Activated CD8-positive, alpha-beta T cell treated with anti-CD3 and anti-CD28 coated beads, Interleukin-2, amount 10 ng/mL, durations not matched to agents 7 days and 5 days (primary cell): ENCODE measurements at regions of chr17 and their contacts with region 1.

Region 1: DNA sequence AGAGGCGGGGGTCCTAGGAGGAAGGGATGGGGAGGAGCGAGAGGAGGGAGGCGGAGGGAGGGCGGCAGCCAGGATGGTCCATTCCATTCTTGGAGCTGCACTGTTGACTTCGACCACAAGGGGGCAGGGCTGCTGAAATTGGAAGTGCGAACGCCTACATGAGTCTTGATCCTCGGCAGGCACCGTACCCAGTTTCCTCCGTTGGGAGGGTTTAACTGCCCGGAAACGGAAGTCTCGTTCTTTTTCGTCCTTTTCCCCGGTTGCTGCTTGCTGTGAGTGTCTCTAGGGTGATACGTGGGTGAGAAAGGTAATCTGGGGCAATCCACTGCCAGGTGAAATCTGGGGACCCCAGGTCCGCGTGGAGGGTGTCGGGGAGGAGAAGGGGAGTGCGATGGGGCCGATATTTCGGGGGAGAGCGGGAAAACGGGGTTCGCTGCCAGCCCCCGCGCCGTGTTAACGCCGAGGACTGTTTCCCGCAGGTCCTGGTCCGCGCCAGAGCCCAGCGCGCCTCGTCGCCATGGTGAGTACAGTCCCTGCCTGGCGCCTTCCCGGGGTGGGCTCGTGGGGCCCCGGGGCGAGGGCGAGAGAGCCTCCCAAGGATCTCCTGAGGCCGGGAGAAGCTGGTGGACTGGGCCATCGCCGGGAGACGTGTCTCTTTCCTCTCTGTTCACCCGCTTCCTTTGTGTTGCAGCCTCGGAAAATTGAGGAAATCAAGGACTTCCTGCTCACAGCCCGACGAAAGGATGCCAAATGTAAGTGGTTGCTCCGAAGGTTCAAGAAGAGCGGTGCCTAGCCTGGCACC is at the start of gene RPL38:
- DNase-seq: peak; percentile 98
- ATAC-seq: peak; percentile 85
- H3K4me3 Mint-ChIP-seq: peak within 1 kb of the TSS; percentile 98
- H3K27ac Mint-ChIP-seq: peak within 1 kb of the TSS; percentile 97
- H3K4me1 Mint-ChIP-seq: peaks cover 45% of the 10 kb centered on the region
- H3K27me3 Mint-ChIP-seq: peaks cover 13% of the 10 kb centered on the region
- total RNA-seq, gene RPL38: 959 to 1,020 TPM

Region 2: DNA sequence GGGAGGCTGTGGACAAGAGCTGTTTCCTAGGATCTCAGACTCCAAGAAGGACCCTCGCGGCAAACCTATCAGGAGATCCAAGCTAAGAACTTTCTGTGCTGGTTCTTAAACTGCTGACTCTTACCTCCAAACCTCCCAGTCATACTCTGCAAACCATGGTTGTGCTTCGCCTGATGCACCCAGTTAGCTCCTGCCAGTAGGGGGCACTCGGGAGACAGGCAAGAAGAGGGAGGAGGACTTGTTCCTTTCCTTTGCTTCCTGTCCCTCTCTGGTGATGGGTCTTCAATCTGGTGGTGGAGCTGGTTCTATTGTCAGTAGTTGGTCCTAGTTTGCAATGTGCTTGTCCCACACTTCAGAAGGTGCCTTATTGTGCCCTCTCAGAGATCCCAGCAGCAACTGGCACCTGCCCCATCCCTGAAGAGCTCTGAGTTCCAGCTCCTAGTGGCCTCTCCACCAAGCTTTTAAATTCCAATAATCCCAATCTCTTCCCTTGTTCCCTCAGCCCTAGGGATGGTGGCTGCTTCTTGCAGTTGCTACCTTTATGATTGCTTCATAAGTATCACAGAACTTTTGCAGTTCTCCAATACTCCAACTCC is 113.7 kb before region 1 on chr17:
- CTCF ChIA-PET with region 1: interaction called, 25 read pairs
- POLR2A ChIA-PET with region 1: no interaction called
- DNase-seq: peak; percentile 79
- ATAC-seq: peak; percentile 68
- H3K4me3 Mint-ChIP-seq: no peak overlapping the region
- H3K27ac Mint-ChIP-seq: no peak overlapping the region
- H3K4me1 Mint-ChIP-seq: no peaks in the 10 kb centered on the region
- H3K27me3 Mint-ChIP-seq: peaks cover 12% of the 10 kb centered on the region

Region 3: DNA sequence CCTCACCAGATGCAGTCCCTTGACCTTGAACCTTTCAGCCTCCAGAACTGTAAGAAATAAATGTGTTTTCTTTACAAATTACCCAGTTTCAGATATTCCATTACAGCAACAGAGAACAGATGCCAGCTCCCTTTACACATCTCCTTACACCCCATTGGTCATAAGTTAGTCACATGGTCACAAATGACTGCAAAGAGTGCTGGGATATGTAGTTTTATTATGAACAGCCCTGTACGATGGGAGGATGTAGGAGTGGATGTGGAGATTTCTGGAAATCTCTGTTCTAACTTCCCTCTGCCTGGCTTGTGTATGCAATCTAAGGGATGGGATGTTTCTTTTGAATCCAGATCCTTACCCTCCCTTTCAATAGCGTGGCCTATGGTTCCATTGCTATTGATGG is 13.5 kb before region 1 on chr17:
- CTCF ChIA-PET with region 1: interaction called, 47 read pairs
- POLR2A ChIA-PET with region 1: interaction called, 4 read pairs
- DNase-seq: no peak
- ATAC-seq: peak; percentile 68
- H3K4me3 Mint-ChIP-seq: no peak overlapping the region
- H3K27ac Mint-ChIP-seq: no peak overlapping the region
- H3K4me1 Mint-ChIP-seq: peaks cover 22% of the 10 kb centered on the region
- H3K27me3 Mint-ChIP-seq: peaks cover 9% of the 10 kb centered on the region

Region 4: GRCh38 chr17:74224959-74225725 is 21.5 kb after region 1 on chr17:
- CTCF ChIA-PET with region 1: no interaction called
- POLR2A ChIA-PET with region 1: no interaction called
- DNase-seq: no peak
- ATAC-seq: no peak
- H3K4me3 Mint-ChIP-seq: no peak overlapping the region
- H3K27ac Mint-ChIP-seq: no peak overlapping the region
- H3K4me1 Mint-ChIP-seq: no peaks in the 10 kb centered on the region
- H3K27me3 Mint-ChIP-seq: no peaks in the 10 kb centered on the region